Caco-2 (cell line): ENCODE measurements at regions of chr17 and their contacts with region 1.

Region 1: DNA sequence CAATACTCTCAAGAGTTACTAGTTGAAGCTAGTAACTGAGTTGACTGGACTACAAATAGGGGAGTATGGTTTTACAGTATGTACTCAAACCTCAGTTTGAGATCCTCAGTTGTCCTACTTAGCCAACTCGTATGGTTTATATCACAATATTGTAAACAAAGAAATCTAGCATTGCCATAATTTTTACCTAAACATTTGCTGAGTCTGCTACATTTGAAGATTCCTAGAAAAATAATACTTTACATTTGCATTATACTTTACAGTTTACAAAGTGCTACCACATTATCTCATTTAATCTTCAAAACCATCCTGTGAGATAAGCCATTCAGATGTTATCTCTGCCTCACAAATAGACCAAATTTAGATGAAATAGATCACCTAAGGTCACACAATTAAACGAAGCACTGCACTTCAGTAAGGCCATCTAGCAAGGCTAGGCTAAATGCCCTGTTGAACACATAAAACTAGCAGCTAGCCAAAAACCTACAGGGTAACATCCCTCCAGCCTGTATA is 16.3 kb downstream of the CBX1 start:
- DNase-seq: no peak
- H3K4me3 ChIP-seq: no peak overlapping the region
- H3K4me3 Mint-ChIP-seq: no peak overlapping the region
- H3K27ac Mint-ChIP-seq: no peak overlapping the region
- H3K4me1 ChIP-seq: peaks cover 7% of the 10 kb centered on the region; the same call in 1 of the 2 replicates
- H3K4me1 Mint-ChIP-seq: no peaks in the 10 kb centered on the region
- H3K27me3 ChIP-seq: no peaks in the 10 kb centered on the region
- H3K27me3 Mint-ChIP-seq: no peaks in the 10 kb centered on the region
- CTCF ChIP-seq: no peak

Region 2: GRCh38 chr17:48068491-48068961 is 16.5 kb before region 1 on chr17:
- CTCF ChIA-PET with region 1: interaction called, 29 read pairs
- POLR2A ChIA-PET with region 1: interaction called, 8 read pairs
- intact Hi-C with region 1: no loop called
- DNase-seq: peak; percentile 82 to 87
- H3K4me3 ChIP-seq: no peak overlapping the region
- H3K4me3 Mint-ChIP-seq: peak overlapping the region; percentile 22
- H3K27ac Mint-ChIP-seq: peak overlapping the region; percentile 52
- H3K4me1 ChIP-seq: peaks cover 15% of the 10 kb centered on the region
- H3K4me1 Mint-ChIP-seq: peaks cover 34% of the 10 kb centered on the region
- H3K27me3 ChIP-seq: no peaks in the 10 kb centered on the region
- H3K27me3 Mint-ChIP-seq: no peaks in the 10 kb centered on the region
- CTCF ChIP-seq: peak; percentile 82 to 86

Region 3: GRCh38 chr17:48101012-48101720 is 16.2 kb after region 1 on chr17 and contains the start of gene CBX1:
- CTCF ChIA-PET with region 1: interaction called, 12 read pairs
- POLR2A ChIA-PET with region 1: interaction called, 7 read pairs
- intact Hi-C with region 1: loop called (anchors 1 kb)
- DNase-seq: peak; percentile 99 to 100
- H3K4me3 ChIP-seq: peak within 1 kb of the TSS; percentile 83
- H3K4me3 Mint-ChIP-seq: peak within 1 kb of the TSS; percentile 93
- H3K27ac Mint-ChIP-seq: peak within 1 kb of the TSS; percentile 79
- H3K4me1 ChIP-seq: peaks cover 8% of the 10 kb centered on the region
- H3K4me1 Mint-ChIP-seq: peaks cover 7% of the 10 kb centered on the region
- H3K27me3 ChIP-seq: no peaks in the 10 kb centered on the region
- H3K27me3 Mint-ChIP-seq: no peaks in the 10 kb centered on the region
- CTCF ChIP-seq: no peak
- total RNA-seq, gene CBX1: 213 and 214 TPM in 2 replicates

Region 4: GRCh38 chr17:48107168-48108132 is 22.5 kb after region 1 on chr17 and contains the start of gene SNX11:
- CTCF ChIA-PET with region 1: interaction called, 21 read pairs
- POLR2A ChIA-PET with region 1: interaction called, 7 read pairs
- intact Hi-C with region 1: no loop called
- DNase-seq: peak; percentile 100
- H3K4me3 ChIP-seq: peak within 1 kb of the TSS; percentile 60
- H3K4me3 Mint-ChIP-seq: peak within 1 kb of the TSS; percentile 95
- H3K27ac Mint-ChIP-seq: peak within 1 kb of the TSS; percentile 95
- H3K4me1 ChIP-seq: 0 out of 2 replicates have a peak, but pooled peaks cover 6% of the 10 kb centered on the region
- H3K4me1 Mint-ChIP-seq: peaks cover 7% of the 10 kb centered on the region
- H3K27me3 ChIP-seq: no peaks in the 10 kb centered on the region
- H3K27me3 Mint-ChIP-seq: no peaks in the 10 kb centered on the region
- CTCF ChIP-seq: peak; percentile 33 to 48
- total RNA-seq, gene SNX11: 36.7 and 40.7 TPM in 2 replicates

Region 5: GRCh38 chr17:48123111-48123510 is 38.1 kb after region 1 on chr17:
- CTCF ChIA-PET with region 1: interaction called, 17 read pairs
- POLR2A ChIA-PET with region 1: no interaction called
- intact Hi-C with region 1: no loop called
- DNase-seq: no peak
- H3K4me3 ChIP-seq: no peak overlapping the region
- H3K4me3 Mint-ChIP-seq: no peak overlapping the region
- H3K27ac Mint-ChIP-seq: no peak overlapping the region
- H3K4me1 ChIP-seq: no peaks in the 10 kb centered on the region
- H3K4me1 Mint-ChIP-seq: no peaks in the 10 kb centered on the region
- H3K27me3 ChIP-seq: no peaks in the 10 kb centered on the region
- H3K27me3 Mint-ChIP-seq: no peaks in the 10 kb centered on the region
- CTCF ChIP-seq: no peak

Region 6: GRCh38 chr17:48131216-48131824 is 46.3 kb after region 1 on chr17:
- CTCF ChIA-PET with region 1: interaction called, 17 read pairs
- POLR2A ChIA-PET with region 1: no interaction called
- intact Hi-C with region 1: loop called (anchors 1 kb)
- DNase-seq: peak; percentile 89 to 95
- H3K4me3 ChIP-seq: no peak overlapping the region
- H3K4me3 Mint-ChIP-seq: no peak overlapping the region
- H3K27ac Mint-ChIP-seq: no peak overlapping the region
- H3K4me1 ChIP-seq: no peaks in the 10 kb centered on the region
- H3K4me1 Mint-ChIP-seq: no peaks in the 10 kb centered on the region
- H3K27me3 ChIP-seq: no peaks in the 10 kb centered on the region
- H3K27me3 Mint-ChIP-seq: peaks cover 4% of the 10 kb centered on the region
- CTCF ChIP-seq: peak; percentile 99

Region 7: DNA sequence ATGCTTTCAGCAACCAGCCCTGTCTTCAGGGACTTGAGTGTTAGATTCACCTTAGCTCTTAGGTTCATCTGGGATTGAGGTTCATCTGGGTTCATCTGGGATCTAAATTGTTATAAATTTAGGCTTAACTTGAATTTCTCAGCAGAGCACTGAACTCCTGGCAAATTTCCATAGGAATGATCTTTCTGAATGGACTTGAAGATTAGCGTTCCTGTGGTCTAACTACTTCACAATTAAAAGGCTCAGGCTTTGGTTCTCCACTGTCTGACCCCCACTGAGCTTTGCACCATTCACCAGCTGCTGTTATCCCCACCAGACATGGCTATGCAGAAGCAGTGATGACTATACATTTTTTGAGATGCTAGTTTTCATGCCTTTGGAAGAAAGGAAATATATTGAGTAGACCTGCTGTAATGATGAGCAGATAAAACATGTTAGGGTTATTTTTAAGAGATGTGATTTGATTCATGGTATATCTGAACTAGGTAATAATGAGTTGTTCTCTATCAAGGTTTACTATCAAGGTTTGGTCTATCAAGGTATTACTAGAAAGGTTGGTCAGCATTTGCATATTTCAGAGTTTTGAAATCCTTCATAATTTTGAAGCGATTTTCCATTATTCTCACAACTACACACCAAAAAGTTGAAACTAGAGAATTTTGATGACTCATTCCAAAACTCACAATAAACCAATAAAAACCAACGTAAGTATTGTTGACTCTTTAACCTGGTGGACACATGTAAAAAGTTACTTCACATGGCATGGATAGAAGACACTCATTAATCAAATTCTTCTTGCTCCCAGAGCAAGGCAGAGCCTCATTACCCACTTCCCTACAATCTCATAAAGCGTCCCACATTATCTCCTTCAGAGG is 94.3 kb after region 1 on chr17:
- CTCF ChIA-PET with region 1: no interaction called
- POLR2A ChIA-PET with region 1: no interaction called
- intact Hi-C with region 1: no loop called
- DNase-seq: no peak
- H3K4me3 ChIP-seq: no peak overlapping the region
- H3K4me3 Mint-ChIP-seq: no peak overlapping the region
- H3K27ac Mint-ChIP-seq: no peak overlapping the region
- H3K4me1 ChIP-seq: no peaks in the 10 kb centered on the region
- H3K4me1 Mint-ChIP-seq: no peaks in the 10 kb centered on the region
- H3K27me3 ChIP-seq: 0 out of 2 replicates have a peak, but pooled peaks cover 2% of the 10 kb centered on the region
- H3K27me3 Mint-ChIP-seq: peaks cover 11% of the 10 kb centered on the region
- CTCF ChIP-seq: peak in 1 of 2 experiments; percentile 6